CD8-positive, alpha-beta memory T cell (primary cell): ENCODE measurements at regions of chr4 and their contacts with region 1.

Region 1: DNA sequence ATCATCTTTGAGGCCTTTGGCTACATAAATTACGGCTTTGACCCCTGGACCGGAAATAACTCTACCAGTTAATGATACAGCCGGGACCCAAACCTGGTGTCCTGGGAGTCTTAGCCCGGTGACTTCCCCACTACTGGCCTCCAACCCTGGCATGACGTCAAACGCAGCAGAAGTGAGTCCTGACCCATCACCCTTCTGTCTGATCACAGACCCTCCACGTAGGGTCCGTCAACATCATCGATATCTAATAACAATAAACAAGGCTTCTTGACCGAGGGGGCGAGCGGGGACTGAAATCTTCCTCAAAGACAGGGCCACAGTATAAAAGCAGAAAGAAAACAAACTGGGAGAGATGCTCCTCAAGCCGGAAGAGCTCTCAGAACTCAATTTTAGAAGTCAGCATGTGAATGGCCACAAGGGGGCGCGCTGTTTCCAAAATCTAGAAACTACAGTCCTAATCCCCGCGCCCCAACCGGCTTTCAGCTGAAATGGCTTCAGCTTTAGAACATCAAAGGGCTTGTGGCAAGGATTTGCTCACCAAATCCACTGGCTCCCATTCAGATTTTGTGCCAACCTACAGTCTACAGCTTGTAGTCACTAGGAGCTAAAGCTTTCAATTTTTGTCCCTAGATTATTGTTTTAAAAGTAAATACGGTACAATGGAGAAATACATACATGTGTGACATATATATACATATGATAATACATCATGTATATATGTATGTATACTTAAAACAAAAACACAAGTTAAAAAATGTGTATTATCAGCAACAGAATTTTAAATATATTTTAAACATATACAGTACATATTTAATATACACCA is 46.4 kb upstream of the ENPP6 start:
- DNase-seq: peak; percentile 84 to 93 (median 90)
- H3K4me3 ChIP-seq: no peak overlapping the region
- H3K4me3 Mint-ChIP-seq: peak overlapping the region in 1 of 7 donors; percentile 5
- H3K27ac ChIP-seq: no peak overlapping the region
- H3K27ac Mint-ChIP-seq: peak overlapping the region in 5 of 8 donors; percentile 2 to 56 (median 17)
- H3K4me1 ChIP-seq: peaks cover 20% of the 10 kb centered on the region
- H3K4me1 Mint-ChIP-seq: peaks cover 27 to 36% (median 30%) of the 10 kb centered on the region in 3 donors
- H3K27me3 ChIP-seq: no peaks in the 10 kb centered on the region
- H3K27me3 Mint-ChIP-seq: peaks cover 0 to under 1% of the 10 kb centered on the region in 2 donors

Region 2: GRCh38 chr4:184250795-184251669 is 13.1 kb before region 1 on chr4:
- CTCF ChIA-PET with region 1: interaction called, 26 read pairs
- POLR2A ChIA-PET with region 1: no interaction called
- DNase-seq: peak in 2 of 5 donors; percentile 46 to 52
- H3K4me3 ChIP-seq: no peak overlapping the region
- H3K4me3 Mint-ChIP-seq: no peak overlapping the region
- H3K27ac ChIP-seq: no peak overlapping the region
- H3K27ac Mint-ChIP-seq: peak overlapping the region in 3 of 8 donors; percentile 1 to 59 (median 3)
- H3K4me1 ChIP-seq: no peaks in the 10 kb centered on the region
- H3K4me1 Mint-ChIP-seq: peaks cover 4 to 9% (median 5%) of the 10 kb centered on the region in 3 donors
- H3K27me3 ChIP-seq: no peaks in the 10 kb centered on the region
- H3K27me3 Mint-ChIP-seq: peaks cover 3 to 10% of the 10 kb centered on the region in 2 donors

Region 3: GRCh38 chr4:184282251-184282713 is 18.2 kb after region 1 on chr4:
- CTCF ChIA-PET with region 1: interaction called, 13 read pairs
- POLR2A ChIA-PET with region 1: interaction called, 11 read pairs
- DNase-seq: peak; percentile 13 to 74 (median 42)
- H3K4me3 ChIP-seq: no peak overlapping the region
- H3K4me3 Mint-ChIP-seq: peak overlapping the region in 6 of 7 donors; percentile 24 to 57 (median 41)
- H3K27ac ChIP-seq: no peak overlapping the region
- H3K27ac Mint-ChIP-seq: peak overlapping the region; percentile 21 to 80 (median 74)
- H3K4me1 ChIP-seq: peaks cover 36% of the 10 kb centered on the region
- H3K4me1 Mint-ChIP-seq: peaks cover 31 to 46% (median 34%) of the 10 kb centered on the region in 3 donors
- H3K27me3 ChIP-seq: no peaks in the 10 kb centered on the region
- H3K27me3 Mint-ChIP-seq: no peaks in the 10 kb centered on the region

Region 4: GRCh38 chr4:184329659-184330400 is 65.7 kb after region 1 on chr4:
- CTCF ChIA-PET with region 1: no interaction called
- POLR2A ChIA-PET with region 1: no interaction called
- DNase-seq: no peak
- H3K4me3 ChIP-seq: no peak overlapping the region
- H3K4me3 Mint-ChIP-seq: no peak overlapping the region
- H3K27ac ChIP-seq: no peak overlapping the region
- H3K27ac Mint-ChIP-seq: no peak overlapping the region
- H3K4me1 ChIP-seq: no peaks in the 10 kb centered on the region
- H3K4me1 Mint-ChIP-seq: peaks cover 0 to 6% (median 3%) of the 10 kb centered on the region in 3 donors
- H3K27me3 ChIP-seq: no peaks in the 10 kb centered on the region
- H3K27me3 Mint-ChIP-seq: no peaks in the 10 kb centered on the region

Region 5: DNA sequence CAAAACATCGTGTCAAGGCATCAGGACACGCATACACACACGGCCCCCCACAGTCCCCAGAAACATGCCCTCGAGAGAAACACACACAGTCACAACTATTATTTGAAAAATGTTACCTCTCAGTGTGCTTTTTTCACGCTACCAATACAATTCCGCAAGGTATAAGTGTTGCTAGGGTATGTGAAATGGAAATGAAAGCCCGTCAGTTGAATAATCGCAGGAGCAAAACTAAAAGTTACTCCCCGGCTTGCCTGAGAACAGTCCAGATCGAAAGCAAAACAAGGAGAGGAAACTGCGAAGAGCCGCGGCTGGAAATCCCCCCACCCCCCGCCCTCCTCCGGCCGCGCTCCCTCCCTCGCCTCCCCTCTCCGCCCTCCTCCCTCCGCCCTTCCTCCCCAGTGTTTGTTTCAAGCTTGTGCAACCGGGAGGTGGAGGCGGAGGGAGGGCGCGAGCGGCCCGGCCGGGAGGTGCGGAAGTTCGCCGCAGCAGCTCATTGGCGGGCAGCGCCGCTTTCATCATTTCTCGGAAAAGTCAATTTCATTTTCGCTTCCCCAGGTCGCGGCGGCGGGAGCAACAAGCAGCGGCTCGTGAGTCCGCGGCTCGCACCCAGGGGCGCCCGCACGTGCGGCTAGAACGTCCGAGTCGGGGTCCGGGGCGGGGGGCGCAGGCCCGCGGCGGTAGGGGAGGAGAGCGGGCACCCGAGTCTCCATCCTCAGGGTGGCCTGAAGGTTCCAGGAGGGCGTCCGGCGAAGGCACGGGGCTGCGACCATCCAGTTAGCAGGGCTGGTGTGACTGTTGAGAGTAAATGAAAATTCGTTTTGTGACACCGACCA is 210.4 kb after region 1 on chr4 and contains the start of gene IRF2:
- CTCF ChIA-PET with region 1: interaction called, 11 read pairs
- POLR2A ChIA-PET with region 1: interaction called, 17 read pairs
- DNase-seq: peak; percentile 94 to 98 (median 95)
- H3K4me3 ChIP-seq: peak within 1 kb of the TSS; percentile 100
- H3K4me3 Mint-ChIP-seq: peak within 1 kb of the TSS; percentile 94 to 100 (median 100)
- H3K27ac ChIP-seq: peak within 1 kb of the TSS; percentile 94
- H3K27ac Mint-ChIP-seq: peak within 1 kb of the TSS; percentile 96 to 100 (median 98)
- H3K4me1 ChIP-seq: peaks cover 45% of the 10 kb centered on the region
- H3K4me1 Mint-ChIP-seq: peaks cover 58 to 72% (median 69%) of the 10 kb centered on the region in 3 donors
- H3K27me3 ChIP-seq: no peaks in the 10 kb centered on the region
- H3K27me3 Mint-ChIP-seq: no peaks in the 10 kb centered on the region
- total RNA-seq, gene IRF2: 44.1 to 44.3 TPM

Region 6: DNA sequence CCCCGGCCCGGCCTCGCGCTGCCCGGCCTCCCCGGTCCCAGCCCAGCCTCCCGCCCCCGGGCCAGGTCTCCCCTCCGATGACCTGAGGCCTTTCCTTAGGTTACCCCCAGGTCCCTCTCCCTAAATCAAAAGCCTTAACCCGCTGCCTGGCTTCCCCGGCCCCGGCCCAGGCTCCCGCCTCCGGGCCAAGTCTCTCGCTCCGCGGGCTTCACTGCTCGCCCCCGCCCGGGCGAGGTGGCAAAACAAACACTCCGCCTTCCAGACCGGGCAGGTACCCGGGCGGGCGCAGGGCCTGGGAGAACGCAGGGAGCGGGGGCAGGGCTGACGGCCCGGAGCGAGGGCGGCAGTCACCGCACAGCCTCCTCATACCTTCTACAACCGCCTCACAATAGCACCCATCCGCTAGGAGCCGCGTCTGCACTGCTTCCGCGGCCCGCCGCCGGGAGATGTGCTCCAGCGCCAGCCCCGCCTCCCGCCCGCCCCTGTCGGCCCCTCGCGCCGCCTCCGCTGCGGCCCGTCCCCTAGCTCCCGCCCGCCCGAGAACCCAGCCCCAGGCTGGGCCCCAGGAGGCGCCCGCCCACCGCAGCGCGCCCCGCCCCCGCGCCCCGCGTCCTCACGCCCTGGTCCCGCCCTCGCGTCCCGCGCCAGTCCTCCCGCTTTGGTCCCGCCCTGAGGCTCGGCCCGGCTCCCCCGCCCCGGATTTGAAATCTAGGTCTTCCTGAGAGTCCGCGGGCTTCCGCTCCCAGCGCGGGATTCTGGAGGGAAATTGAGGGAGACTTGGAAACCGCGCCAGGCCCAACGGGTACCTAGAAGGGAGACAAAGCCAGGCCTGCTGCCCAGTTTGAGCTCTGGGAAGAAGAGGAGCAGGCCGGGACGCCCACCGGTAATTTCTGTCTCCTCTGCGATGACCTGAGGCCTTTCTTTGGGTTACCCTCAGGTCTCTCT is 385.2 kb after region 1 on chr4 and contains the starts of genes CASP3 and PRIMPOL:
- CTCF ChIA-PET with region 1: interaction called, 14 read pairs
- POLR2A ChIA-PET with region 1: interaction called, 9 read pairs
- DNase-seq: peak; percentile 94 to 97 (median 95)
- H3K4me3 ChIP-seq: peak within 1 kb of the TSS; percentile 89
- H3K4me3 Mint-ChIP-seq: peak within 1 kb of the TSS; percentile 92 to 99 (median 97)
- H3K27ac ChIP-seq: peak within 1 kb of the TSS; percentile 82
- H3K27ac Mint-ChIP-seq: peak within 1 kb of the TSS; percentile 87 to 98 (median 96)
- H3K4me1 ChIP-seq: peaks cover 48% of the 10 kb centered on the region
- H3K4me1 Mint-ChIP-seq: peaks cover 50 to 67% (median 60%) of the 10 kb centered on the region in 3 donors
- H3K27me3 ChIP-seq: no peaks in the 10 kb centered on the region
- H3K27me3 Mint-ChIP-seq: no peaks in the 10 kb centered on the region
- total RNA-seq, gene CASP3: 75.1 to 77.1 TPM
- total RNA-seq, gene PRIMPOL: 19.0 to 20.2 TPM

Region 7: DNA sequence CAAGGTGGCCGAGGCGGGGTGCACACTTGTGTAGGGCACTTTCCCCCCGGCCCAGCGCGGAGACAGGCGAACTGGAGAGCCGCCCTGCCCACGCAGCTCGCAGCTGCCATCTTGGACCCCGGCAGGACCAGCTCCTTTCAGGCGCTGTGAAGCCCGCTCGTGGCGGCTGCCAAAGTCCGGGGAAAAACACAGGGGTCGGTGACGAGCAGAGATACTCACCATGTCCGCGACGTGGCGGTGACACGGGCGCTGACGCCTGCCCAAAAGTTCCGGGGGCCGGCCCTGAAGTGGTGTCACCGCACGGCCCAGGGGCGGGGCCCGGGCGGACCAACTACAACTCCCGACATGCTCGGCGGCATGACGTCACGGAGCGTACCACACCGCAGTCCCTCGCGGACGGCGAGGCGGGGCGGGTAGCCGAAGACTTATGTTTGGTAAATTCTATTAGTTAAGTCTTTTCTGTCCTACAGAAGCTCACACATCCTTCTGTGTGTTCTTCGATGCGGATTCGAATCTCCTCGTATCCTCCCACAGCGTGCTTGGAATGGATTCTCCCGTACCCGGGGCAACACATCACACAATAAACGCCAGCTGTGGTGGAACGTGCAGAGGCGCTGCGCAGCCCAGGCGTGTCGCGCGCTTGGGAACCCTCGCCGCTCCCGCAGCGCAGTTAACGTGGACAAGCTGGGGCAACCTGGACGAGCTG is 1161.7 kb after region 1 on chr4 and contains the start of gene UFSP2:
- CTCF ChIA-PET with region 1: no interaction called
- POLR2A ChIA-PET with region 1: interaction called, 13 read pairs
- DNase-seq: peak; percentile 84 to 94 (median 90)
- H3K4me3 ChIP-seq: peak within 1 kb of the TSS; percentile 94
- H3K4me3 Mint-ChIP-seq: peak within 1 kb of the TSS; percentile 81 to 99 (median 91)
- H3K27ac ChIP-seq: peak within 1 kb of the TSS; percentile 100
- H3K27ac Mint-ChIP-seq: peak within 1 kb of the TSS; percentile 82 to 100 (median 100)
- H3K4me1 ChIP-seq: peaks cover 21% of the 10 kb centered on the region
- H3K4me1 Mint-ChIP-seq: peaks cover 32 to 43% (median 43%) of the 10 kb centered on the region in 3 donors
- H3K27me3 ChIP-seq: no peaks in the 10 kb centered on the region
- H3K27me3 Mint-ChIP-seq: peaks cover 0 to 11% of the 10 kb centered on the region in 2 donors
- total RNA-seq, gene UFSP2: 19.5 to 19.8 TPM